ENCODE measurements at regions of chr21 and their contacts with region 1.

Region 1: GRCh38 chr21:17679002-17679600 is 66.4 kb upstream of the BTG3 start:
- H3K4me3 Mint-ChIP-seq: no peak overlapping the region
- H3K27ac Mint-ChIP-seq: no peak overlapping the region
- H3K4me1 Mint-ChIP-seq: no peaks in the 10 kb centered on the region
- H3K27me3 Mint-ChIP-seq: no peaks in the 10 kb centered on the region

Region 2: GRCh38 chr21:17903029-17903806 is 224.1 kb after region 1 on chr21:
- intact Hi-C with region 1: loop called (anchors 1 kb)
- H3K4me3 Mint-ChIP-seq: no peak overlapping the region
- H3K27ac Mint-ChIP-seq: no peak overlapping the region
- H3K4me1 Mint-ChIP-seq: peaks cover 9% of the 10 kb centered on the region
- H3K27me3 Mint-ChIP-seq: no peaks in the 10 kb centered on the region

Region 3: GRCh38 chr21:17925000-17925610 is 246.0 kb after region 1 on chr21:
- intact Hi-C with region 1: loop called (anchors 1 kb)
- H3K4me3 Mint-ChIP-seq: no peak overlapping the region
- H3K27ac Mint-ChIP-seq: no peak overlapping the region
- H3K4me1 Mint-ChIP-seq: no peaks in the 10 kb centered on the region
- H3K27me3 Mint-ChIP-seq: peaks cover 3% of the 10 kb centered on the region